ENCODE measurements at regions of chr1 and their contacts with region 1.

Region 1: DNA sequence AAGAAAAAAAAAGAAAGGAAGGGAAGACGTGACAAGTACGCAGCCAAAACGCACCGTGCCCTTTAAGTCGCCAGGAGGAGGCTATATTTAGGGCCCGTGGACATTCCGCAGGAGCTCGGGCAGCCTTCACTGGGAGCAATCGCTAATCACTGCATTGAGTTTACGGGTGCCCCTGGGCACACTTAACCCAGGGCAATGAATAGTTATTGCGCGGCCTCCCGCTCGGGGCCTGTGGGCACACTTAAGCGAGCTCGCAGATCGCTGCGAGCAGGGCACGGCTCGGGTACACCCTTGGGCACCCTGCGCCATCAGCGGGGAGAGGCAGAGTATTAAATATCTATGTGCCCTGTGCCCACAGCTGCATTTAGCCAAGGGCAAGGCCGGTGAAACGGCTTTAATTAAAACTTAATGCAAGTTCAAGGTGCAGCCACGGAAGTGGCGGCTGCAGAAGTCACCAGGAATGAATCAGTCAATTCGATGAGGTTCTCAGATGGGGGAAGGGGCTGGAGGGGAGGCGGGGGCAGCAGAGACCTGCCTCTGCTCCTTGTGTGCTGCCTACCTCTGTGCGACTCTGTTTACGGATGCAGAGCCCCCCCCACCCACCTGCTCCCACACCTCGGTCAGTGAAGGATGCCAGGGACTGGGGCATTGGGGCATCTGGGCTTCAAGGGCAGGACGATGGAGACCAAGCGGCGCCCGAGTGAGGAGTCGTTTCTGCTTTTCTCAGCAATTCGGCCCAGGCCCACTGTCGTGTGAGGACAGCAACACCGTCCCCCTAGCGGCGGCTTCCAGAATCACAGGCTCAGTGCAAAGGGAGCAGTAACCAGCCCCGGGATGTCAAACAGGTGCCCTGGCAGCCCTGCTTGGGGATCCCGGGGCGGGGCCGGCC is 51.8 kb upstream of the TARDBP start:
- DNase-seq: peak; percentile 56
- ATAC-seq: peak; percentile 93
- H3K4me3 ChIP-seq: no peak overlapping the region; a peak in 1 of 6 replicates
- H3K27ac ChIP-seq: no peak overlapping the region
- H3K4me1 ChIP-seq: peaks cover 16% of the 10 kb centered on the region
- H3K27me3 ChIP-seq: peaks cover 3 to 42% of the 10 kb centered on the region in 2 experiments
- CTCF ChIP-seq: peak; percentile 83
- EP300 ChIP-seq: no peak
- POLR2A ChIP-seq: no peak
- RAD21 ChIP-seq: peak; percentile 47; the same call in 1 of the 2 replicates

Region 2: DNA sequence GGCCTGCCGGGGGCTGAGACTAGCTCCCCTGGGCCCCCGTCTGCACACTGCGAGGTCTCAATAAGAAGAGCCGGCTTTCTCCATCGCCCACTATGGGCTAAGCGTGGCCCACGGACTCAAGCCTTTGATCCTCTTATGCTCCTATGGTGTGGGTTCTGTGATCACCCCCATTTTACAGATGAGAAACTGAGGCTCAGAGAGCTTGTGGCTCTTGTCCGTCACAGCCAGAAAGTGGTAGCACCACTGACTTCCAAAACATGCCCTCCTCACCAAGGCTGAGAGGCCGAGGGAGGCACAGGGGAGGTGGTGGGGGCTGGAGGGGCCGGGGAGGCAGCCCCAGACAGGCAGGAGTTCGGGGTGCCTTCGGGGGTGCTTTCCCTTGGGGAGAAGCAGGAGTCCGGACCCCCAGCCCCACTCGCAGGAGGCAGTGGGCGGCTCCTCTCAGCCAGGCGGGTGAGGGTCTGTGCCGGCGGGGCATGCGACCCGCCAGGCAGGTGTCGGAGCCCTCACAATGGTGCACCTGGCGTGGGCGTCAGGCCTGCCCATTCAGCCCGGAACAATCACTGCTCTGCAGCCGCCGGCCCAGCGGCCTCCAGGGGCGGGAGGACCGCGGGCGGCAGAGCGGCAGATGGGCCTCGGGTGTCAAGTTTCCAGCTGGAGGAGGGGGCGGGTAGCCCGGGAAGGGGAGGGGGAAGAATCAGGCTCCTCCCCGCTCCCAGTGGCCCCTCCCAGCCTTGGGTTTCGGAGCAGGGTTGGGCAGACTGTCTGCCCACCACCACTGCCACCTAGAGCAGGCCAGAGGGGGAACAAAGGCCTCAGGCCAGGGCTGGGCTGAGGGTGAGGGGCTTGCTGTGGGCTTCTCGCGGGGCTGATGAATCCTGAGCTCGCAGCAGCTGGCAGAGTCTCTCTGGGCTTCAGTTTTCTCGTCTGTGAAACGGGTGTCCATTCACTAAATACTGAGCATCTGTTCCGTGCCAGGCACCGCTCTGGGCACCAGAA is 124.9 kb before region 1 on chr1:
- CTCF ChIA-PET with region 1: no interaction called
- POLR2A ChIA-PET with region 1: no interaction called
- in situ Hi-C with region 1: no loop called
- intact Hi-C with region 1: no loop called
- DNase-seq: peak; percentile 61
- ATAC-seq: peak; percentile 89
- H3K4me3 ChIP-seq: no peak overlapping the region; a peak in 1 of 6 replicates
- H3K27ac ChIP-seq: no peak overlapping the region
- H3K4me1 ChIP-seq: no peaks in the 10 kb centered on the region
- H3K27me3 ChIP-seq: peaks cover 0 to 10% of the 10 kb centered on the region in 2 experiments; a peak in 3 of 5 replicates
- CTCF ChIP-seq: peak; percentile 42
- EP300 ChIP-seq: no peak
- POLR2A ChIP-seq: no peak
- RAD21 ChIP-seq: peak; percentile 46

Region 3: GRCh38 chr1:10867138-10867721 is 93.4 kb before region 1 on chr1:
- CTCF ChIA-PET with region 1: no interaction called
- POLR2A ChIA-PET with region 1: no interaction called
- in situ Hi-C with region 1: no loop called
- intact Hi-C with region 1: loop called (anchors 10 kb)
- DNase-seq: no peak
- ATAC-seq: peak; percentile 88
- H3K4me3 ChIP-seq: peak overlapping the region in 2 of 3 experiments; percentile 22 to 52; a peak in 4 of 6 replicates
- H3K27ac ChIP-seq: no peak overlapping the region
- H3K4me1 ChIP-seq: peaks cover 25% of the 10 kb centered on the region
- H3K27me3 ChIP-seq: peaks cover 4 to 67% of the 10 kb centered on the region in 2 experiments
- CTCF ChIP-seq: peak; percentile 49; the same call in 1 of the 2 replicates
- EP300 ChIP-seq: no peak
- POLR2A ChIP-seq: no peak
- RAD21 ChIP-seq: peak; percentile 82

Measured in HepG2 (cell line).